BJ (cell line): ENCODE measurements at regions of chr18 and their contacts with region 1.

Region 1: DNA sequence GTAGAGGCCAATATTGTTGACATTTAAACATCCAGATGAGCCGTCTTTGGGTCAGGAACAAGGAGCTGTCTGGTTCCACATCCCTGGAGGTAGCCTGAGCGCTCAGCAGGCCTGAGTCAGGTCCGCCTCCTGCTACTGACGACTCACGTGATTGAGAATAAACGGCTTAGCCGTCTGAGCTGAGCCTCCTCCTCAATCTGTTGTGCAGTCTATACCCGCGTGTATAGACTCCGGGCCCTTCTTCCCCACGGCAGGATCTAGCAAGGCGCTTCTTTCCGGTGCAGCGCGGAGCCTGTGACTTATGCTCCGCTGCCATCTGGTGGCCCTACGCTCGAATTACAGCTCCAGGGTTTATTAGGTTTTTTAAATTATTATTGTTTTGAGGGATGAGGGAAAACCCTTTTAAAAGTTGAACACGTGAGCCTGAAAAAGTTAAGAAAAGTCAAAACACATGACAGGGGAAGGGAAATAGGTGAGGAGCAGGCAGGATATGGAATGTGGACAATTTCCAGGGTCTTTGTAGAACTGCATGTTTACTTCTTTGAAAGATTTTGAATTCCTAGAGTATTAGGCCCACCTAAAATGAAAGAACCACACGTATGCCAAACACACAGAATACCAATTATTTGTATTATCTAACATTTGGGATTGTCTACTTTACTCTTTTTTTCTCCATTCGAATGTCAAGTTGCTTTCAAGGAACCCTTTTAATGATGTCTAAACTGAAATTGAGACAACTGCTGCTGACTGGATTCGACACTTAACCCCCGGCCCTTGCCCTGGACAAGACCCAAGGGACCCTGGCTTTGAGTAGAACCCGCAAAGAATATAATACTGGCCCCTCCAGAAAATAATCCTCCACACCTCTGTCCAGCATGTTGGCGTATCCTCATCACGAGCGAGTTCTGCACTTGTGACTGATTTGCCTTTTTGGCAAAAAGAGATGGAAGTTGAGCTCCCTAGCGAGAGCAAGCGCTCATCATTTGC is 112.4 kb upstream of the ZNF236 start:
- DNase-seq: no peak
- H3K4me3 ChIP-seq: no peak overlapping the region
- H3K27me3 ChIP-seq: no peaks in the 10 kb centered on the region
- CTCF ChIP-seq: peak; percentile 89

Region 2: GRCh38 chr18:76364282-76365259 is 345.4 kb before region 1 on chr18:
- CTCF ChIA-PET with region 1: interaction called, 10 read pairs
- POLR2A ChIA-PET with region 1: no interaction called
- DNase-seq: no peak
- H3K4me3 ChIP-seq: no peak overlapping the region
- H3K27me3 ChIP-seq: no peaks in the 10 kb centered on the region
- CTCF ChIP-seq: no peak

Region 3: DNA sequence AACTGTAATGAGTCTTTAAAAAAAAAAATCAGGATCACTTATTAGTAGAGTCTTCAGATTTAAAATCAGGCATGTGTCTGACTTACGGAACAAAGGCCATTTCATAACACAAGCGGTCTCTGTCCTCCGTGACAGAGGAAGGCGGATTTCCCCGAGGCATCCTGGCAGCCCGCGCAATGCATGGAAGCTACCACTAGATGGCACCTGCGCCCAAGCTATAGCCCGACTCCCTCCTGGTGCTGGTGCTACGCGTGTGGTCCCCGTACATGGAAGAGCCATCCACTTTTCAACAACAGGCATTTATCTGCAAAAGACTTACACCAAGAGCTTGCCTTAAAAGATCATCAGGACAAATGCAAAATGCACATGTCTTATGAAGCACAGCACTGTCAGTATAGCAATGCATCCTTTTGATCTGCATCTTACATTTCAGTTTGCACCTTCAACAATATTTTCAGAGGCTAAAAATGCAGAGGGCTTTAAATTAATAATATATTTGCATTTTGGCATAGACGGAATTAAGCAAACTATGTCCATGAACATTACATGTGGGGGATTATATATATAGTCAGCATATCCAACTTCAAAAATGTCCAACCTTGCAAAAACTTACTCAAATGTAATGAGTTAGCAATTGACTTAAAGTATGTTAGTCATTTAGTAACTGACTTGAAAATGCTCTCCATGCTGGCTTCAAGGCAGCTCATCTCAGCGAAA is 310.9 kb before region 1 on chr18:
- CTCF ChIA-PET with region 1: interaction called, 70 read pairs
- POLR2A ChIA-PET with region 1: no interaction called
- DNase-seq: no peak
- H3K4me3 ChIP-seq: no peak overlapping the region
- H3K27me3 ChIP-seq: no peaks in the 10 kb centered on the region
- CTCF ChIP-seq: peak; percentile 99

Region 4: GRCh38 chr18:76686737-76687262 is 23.2 kb before region 1 on chr18:
- CTCF ChIA-PET with region 1: interaction called, 12 read pairs
- POLR2A ChIA-PET with region 1: no interaction called
- DNase-seq: no peak
- H3K4me3 ChIP-seq: no peak overlapping the region
- H3K27me3 ChIP-seq: peaks cover 9% of the 10 kb centered on the region
- CTCF ChIP-seq: peak; percentile 74

Region 5: GRCh38 chr18:76699923-76700322 is 10.0 kb before region 1 on chr18:
- CTCF ChIA-PET with region 1: interaction called, 29 read pairs
- POLR2A ChIA-PET with region 1: no interaction called
- DNase-seq: no peak
- H3K4me3 ChIP-seq: no peak overlapping the region
- H3K27me3 ChIP-seq: no peaks in the 10 kb centered on the region
- CTCF ChIP-seq: no peak

Region 6: GRCh38 chr18:76721207-76721996 is 11.4 kb after region 1 on chr18:
- CTCF ChIA-PET with region 1: interaction called, 15 read pairs
- POLR2A ChIA-PET with region 1: no interaction called
- DNase-seq: no peak
- H3K4me3 ChIP-seq: no peak overlapping the region
- H3K27me3 ChIP-seq: no peaks in the 10 kb centered on the region
- CTCF ChIP-seq: no peak

Region 7: DNA sequence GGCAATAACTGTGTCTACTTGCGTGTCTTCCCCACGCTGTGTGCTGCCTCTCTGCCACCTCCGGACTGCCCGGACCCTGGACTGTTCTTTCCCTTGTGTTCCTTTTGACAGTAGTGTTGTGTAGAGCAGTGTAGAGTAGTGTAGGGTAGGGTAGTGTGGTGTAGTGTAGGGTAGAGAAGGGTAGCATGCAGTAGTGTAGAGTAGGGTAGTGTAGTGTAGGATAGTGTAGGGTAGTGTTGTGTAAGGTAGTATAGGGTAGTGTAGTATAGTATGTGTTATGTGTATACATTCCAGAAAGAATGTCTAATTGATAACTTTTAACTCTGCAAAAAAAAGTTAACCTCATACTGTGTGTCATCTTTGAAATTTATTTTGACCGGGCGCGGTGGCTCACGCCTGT is 62.7 kb after region 1 on chr18:
- CTCF ChIA-PET with region 1: no interaction called
- POLR2A ChIA-PET with region 1: no interaction called
- DNase-seq: no peak
- H3K4me3 ChIP-seq: no peak overlapping the region
- H3K27me3 ChIP-seq: 0 out of 2 replicates have a peak, but pooled peaks cover 1% of the 10 kb centered on the region
- CTCF ChIP-seq: no peak